ENCODE measurements at regions of chr1 and their contacts with region 1.

Region 1: GRCh38 chr1:160085686-160086455 is 4.5 kb downstream of the KCNJ9 start:
- DNase-seq: peak; percentile 55 to 81 (median 72)
- ATAC-seq: peak; percentile 81
- H3K4me3 ChIP-seq: no peak overlapping the region
- H3K4me3 Mint-ChIP-seq: peak overlapping the region in 6 of 10 donors; percentile 9 to 47 (median 34)
- H3K27ac ChIP-seq: no peak overlapping the region
- H3K27ac Mint-ChIP-seq: peak overlapping the region in 7 of 9 donors; percentile 46 to 80 (median 76)
- H3K4me1 ChIP-seq: peaks cover 0 to 7% of the 10 kb centered on the region in 2 donors
- H3K4me1 Mint-ChIP-seq: peaks cover 10 to 24% (median 20%) of the 10 kb centered on the region in 7 donors
- H3K27me3 ChIP-seq: peaks cover 8 to 9% of the 10 kb centered on the region in 2 donors
- H3K27me3 Mint-ChIP-seq: peaks cover 18 to 27% (median 19%) of the 10 kb centered on the region in 5 donors

Region 2: DNA sequence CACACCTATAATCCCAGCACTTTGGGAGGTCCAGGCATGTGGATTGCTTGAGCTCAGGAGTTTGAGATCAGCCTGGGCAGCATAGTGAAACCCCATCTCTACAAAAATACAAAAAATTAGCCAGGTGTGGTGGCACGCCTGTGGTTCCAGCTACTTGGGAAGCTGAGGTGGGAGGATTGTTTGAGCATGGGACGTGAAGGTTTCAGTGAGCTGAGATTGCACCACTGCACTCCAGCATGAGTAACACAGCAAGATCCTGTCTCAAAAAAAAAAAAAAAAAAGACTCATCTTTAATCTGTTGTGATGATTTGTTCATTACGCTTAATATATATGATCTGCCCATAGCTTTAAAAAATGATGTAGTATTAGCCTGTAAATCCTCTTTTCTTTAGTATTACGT is 602.4 kb before region 1 on chr1:
- CTCF ChIA-PET with region 1: no interaction called
- POLR2A ChIA-PET with region 1: no interaction called
- intact Hi-C with region 1: no loop called
- DNase-seq: no peak
- ATAC-seq: no peak
- H3K4me3 ChIP-seq: no peak overlapping the region
- H3K4me3 Mint-ChIP-seq: no peak overlapping the region
- H3K27ac ChIP-seq: no peak overlapping the region
- H3K27ac Mint-ChIP-seq: no peak overlapping the region
- H3K4me1 ChIP-seq: no peaks in the 10 kb centered on the region
- H3K4me1 Mint-ChIP-seq: no peaks in the 10 kb centered on the region
- H3K27me3 ChIP-seq: no peaks in the 10 kb centered on the region
- H3K27me3 Mint-ChIP-seq: peaks cover 0 to 31% (median 17%) of the 10 kb centered on the region in 5 donors

Region 3: DNA sequence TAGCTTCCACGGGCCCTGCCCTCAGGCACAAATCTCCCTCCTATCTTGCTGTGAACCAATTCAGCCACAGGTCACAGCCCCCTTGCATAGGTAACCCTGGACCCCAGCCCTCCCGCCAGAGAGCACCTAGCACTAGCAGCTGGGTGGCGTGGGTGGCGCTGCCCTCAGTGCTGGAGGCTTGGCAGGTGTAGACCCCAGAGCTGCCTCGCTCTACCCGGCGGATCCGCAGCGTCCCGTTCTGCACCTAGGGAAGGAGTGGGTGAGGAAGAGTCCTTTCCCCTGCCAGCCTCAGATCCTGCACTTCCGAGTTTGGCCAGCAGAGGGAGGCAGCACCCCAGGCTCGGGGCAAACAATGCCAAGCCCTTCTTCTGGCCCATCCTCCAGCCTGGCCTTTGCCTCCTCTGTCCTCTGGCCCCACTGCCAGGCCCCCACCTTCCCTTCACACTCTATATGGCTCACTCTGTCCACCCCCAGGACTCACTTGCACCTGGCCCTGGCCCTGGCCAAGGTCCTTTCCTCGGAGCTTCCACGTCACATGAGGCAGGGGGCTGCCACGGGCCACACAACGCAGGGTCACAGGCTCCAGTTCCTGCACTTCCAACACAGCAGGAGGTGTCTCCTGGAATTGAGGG is 149.5 kb before region 1 on chr1:
- CTCF ChIA-PET with region 1: no interaction called
- POLR2A ChIA-PET with region 1: no interaction called
- intact Hi-C with region 1: loop called (anchors 1 to 2 kb)
- DNase-seq: peak; percentile 49 to 90 (median 74)
- ATAC-seq: peak; percentile 90
- H3K4me3 ChIP-seq: no peak overlapping the region
- H3K4me3 Mint-ChIP-seq: no peak overlapping the region
- H3K27ac ChIP-seq: no peak overlapping the region
- H3K27ac Mint-ChIP-seq: peak overlapping the region in 1 of 9 donors; percentile 17
- H3K4me1 ChIP-seq: no peaks in the 10 kb centered on the region
- H3K4me1 Mint-ChIP-seq: peaks cover 0 to 20% (median 11%) of the 10 kb centered on the region in 7 donors
- H3K27me3 ChIP-seq: no peaks in the 10 kb centered on the region
- H3K27me3 Mint-ChIP-seq: peaks cover 0 to 23% (median 8%) of the 10 kb centered on the region in 5 donors

Region 4: DNA sequence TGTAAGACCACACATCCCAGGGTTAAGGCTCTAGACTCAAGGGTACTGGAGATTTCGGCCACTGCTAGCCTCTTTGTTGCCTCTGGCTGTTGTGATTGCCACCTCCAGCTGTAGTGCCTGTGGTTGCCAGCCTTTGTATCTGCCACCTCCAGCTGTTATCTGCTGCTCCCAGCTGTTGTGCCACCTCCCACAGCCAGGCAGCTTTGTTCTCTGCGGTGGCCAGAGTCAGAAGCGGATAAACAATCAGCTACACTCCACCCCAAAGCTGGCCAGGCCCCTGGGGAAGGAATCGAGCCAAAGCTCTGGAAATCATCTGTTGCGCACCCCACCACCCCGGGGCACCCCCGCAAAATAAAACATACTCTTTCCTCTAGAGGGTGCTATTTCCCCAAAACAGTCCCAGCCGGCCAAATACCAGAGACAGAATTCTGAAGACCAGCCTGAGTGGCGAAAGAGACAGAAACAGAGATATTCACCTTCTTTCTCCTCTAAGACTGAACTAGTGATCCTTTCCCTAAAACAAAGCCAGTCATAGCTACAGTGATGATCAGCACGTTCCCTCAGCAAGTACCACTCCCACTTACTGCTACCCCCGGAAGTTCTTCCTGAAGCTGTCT is 39.3 kb before region 1 on chr1:
- CTCF ChIA-PET with region 1: interaction called, 71 read pairs
- POLR2A ChIA-PET with region 1: interaction called, 3 read pairs
- intact Hi-C with region 1: loop called (anchors 1 kb)
- DNase-seq: peak in 8 of 9 donors; percentile 24 to 66 (median 44)
- ATAC-seq: peak; percentile 89
- H3K4me3 ChIP-seq: no peak overlapping the region
- H3K4me3 Mint-ChIP-seq: peak overlapping the region; percentile 62 to 86 (median 82)
- H3K27ac ChIP-seq: no peak overlapping the region
- H3K27ac Mint-ChIP-seq: peak overlapping the region in 5 of 9 donors; percentile 18 to 65 (median 43)
- H3K4me1 ChIP-seq: peaks cover 0 to 8% of the 10 kb centered on the region in 2 donors
- H3K4me1 Mint-ChIP-seq: peaks cover 7 to 16% (median 12%) of the 10 kb centered on the region in 7 donors
- H3K27me3 ChIP-seq: no peaks in the 10 kb centered on the region
- H3K27me3 Mint-ChIP-seq: peaks cover 0 to 32% (median 16%) of the 10 kb centered on the region in 5 donors

Region 5: DNA sequence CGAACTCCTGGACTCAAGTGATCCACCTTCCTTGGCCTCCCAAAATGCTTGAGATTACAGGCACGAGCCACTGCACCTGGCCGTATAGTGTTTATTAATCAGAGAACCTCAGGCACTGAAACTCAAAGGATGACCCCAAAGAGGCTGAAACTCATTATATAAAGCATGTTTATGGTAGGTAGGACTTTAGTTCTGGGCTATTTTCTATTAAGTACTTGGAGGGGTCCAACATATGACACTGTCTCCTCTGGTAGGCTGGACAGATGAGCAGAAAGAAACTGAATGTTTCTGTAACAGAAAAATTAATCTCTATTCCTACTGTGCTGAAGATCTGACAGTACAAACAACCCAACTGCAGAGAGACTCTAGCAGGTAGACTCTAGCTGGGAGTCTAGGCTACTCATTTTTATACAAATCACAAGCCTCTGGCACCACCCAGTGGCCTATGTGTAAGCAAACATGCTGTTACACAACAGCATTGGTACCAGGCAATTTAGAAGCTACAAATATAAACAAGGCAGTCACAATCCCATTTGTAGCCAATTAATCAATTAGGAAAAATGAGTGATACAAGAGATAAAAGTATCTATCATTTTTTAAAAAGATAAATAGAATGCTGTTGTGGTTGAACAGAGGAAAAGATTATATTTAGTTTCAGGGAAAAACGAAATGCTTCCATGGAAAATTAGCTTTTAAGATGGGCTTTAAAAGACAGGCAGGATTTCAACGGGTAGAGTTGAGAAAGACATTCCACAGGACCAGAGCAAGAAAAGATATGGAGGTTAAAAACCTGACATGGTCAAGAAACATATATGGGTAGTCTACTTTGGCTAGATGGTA is 166.0 kb after region 1 on chr1:
- CTCF ChIA-PET with region 1: interaction called, 26 read pairs
- POLR2A ChIA-PET with region 1: interaction called, 3 read pairs
- intact Hi-C with region 1: loop called in 1 of 2 experiments (anchors 1 kb)
- DNase-seq: peak in 8 of 9 donors; percentile 43 to 70 (median 60)
- ATAC-seq: peak; percentile 99
- H3K4me3 ChIP-seq: no peak overlapping the region
- H3K4me3 Mint-ChIP-seq: no peak overlapping the region
- H3K27ac ChIP-seq: peak overlapping the region; percentile 6
- H3K27ac Mint-ChIP-seq: peak overlapping the region in 7 of 9 donors; percentile 46 to 80 (median 62)
- H3K4me1 ChIP-seq: no peaks in the 10 kb centered on the region
- H3K4me1 Mint-ChIP-seq: peaks cover 6 to 34% (median 30%) of the 10 kb centered on the region in 7 donors
- H3K27me3 ChIP-seq: no peaks in the 10 kb centered on the region
- H3K27me3 Mint-ChIP-seq: no peaks in the 10 kb centered on the region